ENCODE measurements at regions of chr17 and their contacts with region 1.

Region 1: GRCh38 chr17:29931231-29931932 is 1.4 kb upstream of the SSH2 start:
- DNase-seq: peak; percentile 83
- H3K4me3 Mint-ChIP-seq: no peak overlapping the region
- H3K27ac Mint-ChIP-seq: no peak overlapping the region
- H3K4me1 Mint-ChIP-seq: peaks cover 25% of the 10 kb centered on the region
- H3K27me3 Mint-ChIP-seq: no peaks in the 10 kb centered on the region
- CTCF ChIP-seq: peak; percentile 72

Region 2: DNA sequence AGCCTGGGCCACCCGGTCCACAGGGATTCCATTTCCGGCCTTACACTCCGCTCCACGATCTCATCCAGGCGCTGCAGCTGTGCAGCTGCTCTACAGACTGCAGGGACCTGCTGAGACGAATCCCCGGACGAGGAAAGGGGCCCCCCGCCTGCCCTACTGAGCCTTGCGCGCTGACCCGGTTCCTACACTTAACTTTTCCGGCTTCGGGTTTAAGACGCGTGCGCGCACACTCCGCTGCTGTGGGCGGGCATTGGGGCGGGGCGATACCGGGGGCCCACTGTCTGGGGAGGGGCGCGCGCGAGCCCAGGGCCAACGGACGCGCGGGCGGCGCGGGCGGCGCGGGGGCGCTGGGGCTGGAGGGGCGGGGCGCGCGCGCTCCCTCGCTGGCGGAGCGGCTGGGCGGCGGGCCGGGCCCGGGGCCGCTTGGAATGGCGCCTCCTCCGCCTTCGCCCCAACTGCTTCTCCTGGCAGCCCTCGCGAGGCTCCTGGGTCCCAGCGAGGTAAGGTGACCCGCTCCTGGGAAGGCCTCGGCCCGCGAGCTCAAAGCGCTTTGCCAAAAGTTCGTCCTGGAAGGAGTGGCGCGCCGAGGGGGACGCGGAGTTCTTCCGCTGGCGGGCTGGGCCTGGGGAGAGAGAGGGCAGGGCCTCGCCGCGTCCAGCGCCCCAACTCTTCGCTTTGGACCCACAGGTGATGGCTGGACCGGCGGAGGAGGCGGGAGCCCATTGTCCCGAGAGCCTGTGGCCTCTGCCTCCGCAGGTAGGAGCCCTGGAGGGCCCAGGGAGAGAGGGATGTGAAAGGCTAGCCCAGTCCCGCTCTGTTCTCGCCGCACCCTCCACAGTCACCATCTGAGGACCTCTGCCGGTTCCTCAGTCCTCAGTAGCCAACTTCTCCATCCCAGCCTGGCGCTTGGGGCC is 362.8 kb before region 1 on chr17 and contains the start of gene TP53I13:
- CTCF ChIA-PET with region 1: no interaction called
- POLR2A ChIA-PET with region 1: interaction called, 15 read pairs
- intact Hi-C with region 1: no loop called
- DNase-seq: peak; percentile 78
- H3K4me3 Mint-ChIP-seq: peak within 1 kb of the TSS; percentile 80
- H3K27ac Mint-ChIP-seq: peak within 1 kb of the TSS; percentile 78
- H3K4me1 Mint-ChIP-seq: peaks cover 14% of the 10 kb centered on the region
- H3K27me3 Mint-ChIP-seq: no peaks in the 10 kb centered on the region
- CTCF ChIP-seq: no peak
- total RNA-seq, gene TP53I13: 29.6 and 34.5 TPM in 2 replicates

Region 3: DNA sequence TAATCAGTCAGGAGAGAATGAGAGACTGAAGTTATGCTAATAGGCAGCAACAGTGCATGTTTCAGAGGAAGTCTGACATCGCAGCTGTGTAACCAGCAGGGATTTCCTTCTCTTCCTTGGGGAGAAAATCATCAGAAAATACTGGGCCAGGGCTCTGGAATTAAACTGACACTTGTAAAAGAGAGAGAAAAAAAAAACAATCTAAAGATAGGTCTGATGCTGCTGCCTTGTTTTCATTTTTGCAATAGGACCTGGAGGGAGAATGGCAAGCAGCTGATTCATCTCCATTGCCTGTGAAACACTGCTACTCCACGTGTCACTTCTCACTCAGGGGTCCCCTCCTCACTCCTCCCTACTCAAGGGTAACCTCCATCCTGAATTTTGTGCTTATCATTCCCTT is 291.0 kb before region 1 on chr17:
- CTCF ChIA-PET with region 1: interaction called, 43 read pairs
- POLR2A ChIA-PET with region 1: interaction called, 49 read pairs
- intact Hi-C with region 1: loop called (anchors 1 kb)
- DNase-seq: peak; percentile 33
- H3K4me3 Mint-ChIP-seq: no peak overlapping the region
- H3K27ac Mint-ChIP-seq: peak overlapping the region; percentile 68
- H3K4me1 Mint-ChIP-seq: peaks cover 35% of the 10 kb centered on the region
- H3K27me3 Mint-ChIP-seq: no peaks in the 10 kb centered on the region
- CTCF ChIP-seq: no peak

Region 4: GRCh38 chr17:29855686-29856085 is 75.7 kb before region 1 on chr17:
- CTCF ChIA-PET with region 1: interaction called, 13 read pairs
- POLR2A ChIA-PET with region 1: interaction called, 3 read pairs
- intact Hi-C with region 1: no loop called
- DNase-seq: peak; percentile 29
- H3K4me3 Mint-ChIP-seq: no peak overlapping the region
- H3K27ac Mint-ChIP-seq: no peak overlapping the region
- H3K4me1 Mint-ChIP-seq: peaks cover 20% of the 10 kb centered on the region
- H3K27me3 Mint-ChIP-seq: no peaks in the 10 kb centered on the region
- CTCF ChIP-seq: no peak

Region 5: GRCh38 chr17:29873476-29873875 is 57.9 kb before region 1 on chr17:
- CTCF ChIA-PET with region 1: interaction called, 52 read pairs
- POLR2A ChIA-PET with region 1: interaction called, 14 read pairs
- intact Hi-C with region 1: loop called (anchors 1 kb)
- DNase-seq: no peak
- H3K4me3 Mint-ChIP-seq: no peak overlapping the region
- H3K27ac Mint-ChIP-seq: no peak overlapping the region
- H3K4me1 Mint-ChIP-seq: peaks cover 5% of the 10 kb centered on the region
- H3K27me3 Mint-ChIP-seq: no peaks in the 10 kb centered on the region
- CTCF ChIP-seq: no peak

Region 6: DNA sequence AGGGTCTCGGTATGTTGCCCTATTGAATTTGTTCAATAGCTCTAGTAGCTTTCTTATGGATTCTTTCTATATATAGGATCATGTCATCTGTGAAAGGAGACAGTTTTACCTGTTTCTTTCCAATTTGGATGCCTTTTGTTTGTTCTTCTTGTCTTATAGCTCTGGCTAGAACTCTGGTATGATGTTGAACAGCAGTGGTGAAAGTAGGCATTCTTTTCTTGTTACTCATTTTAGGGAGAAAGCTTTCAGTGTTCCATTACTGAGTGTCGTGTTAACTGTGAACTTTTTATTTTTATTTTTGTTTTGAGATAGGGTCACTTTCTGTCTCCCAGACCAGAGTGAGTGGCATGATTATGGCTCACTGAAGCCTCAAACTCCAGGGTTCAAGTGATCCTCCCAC is 31.3 kb after region 1 on chr17:
- CTCF ChIA-PET with region 1: interaction called, 26 read pairs
- POLR2A ChIA-PET with region 1: interaction called, 4 read pairs
- intact Hi-C with region 1: no loop called
- DNase-seq: no peak
- H3K4me3 Mint-ChIP-seq: no peak overlapping the region
- H3K27ac Mint-ChIP-seq: no peak overlapping the region
- H3K4me1 Mint-ChIP-seq: peaks cover 16% of the 10 kb centered on the region
- H3K27me3 Mint-ChIP-seq: no peaks in the 10 kb centered on the region
- CTCF ChIP-seq: no peak

Region 7: DNA sequence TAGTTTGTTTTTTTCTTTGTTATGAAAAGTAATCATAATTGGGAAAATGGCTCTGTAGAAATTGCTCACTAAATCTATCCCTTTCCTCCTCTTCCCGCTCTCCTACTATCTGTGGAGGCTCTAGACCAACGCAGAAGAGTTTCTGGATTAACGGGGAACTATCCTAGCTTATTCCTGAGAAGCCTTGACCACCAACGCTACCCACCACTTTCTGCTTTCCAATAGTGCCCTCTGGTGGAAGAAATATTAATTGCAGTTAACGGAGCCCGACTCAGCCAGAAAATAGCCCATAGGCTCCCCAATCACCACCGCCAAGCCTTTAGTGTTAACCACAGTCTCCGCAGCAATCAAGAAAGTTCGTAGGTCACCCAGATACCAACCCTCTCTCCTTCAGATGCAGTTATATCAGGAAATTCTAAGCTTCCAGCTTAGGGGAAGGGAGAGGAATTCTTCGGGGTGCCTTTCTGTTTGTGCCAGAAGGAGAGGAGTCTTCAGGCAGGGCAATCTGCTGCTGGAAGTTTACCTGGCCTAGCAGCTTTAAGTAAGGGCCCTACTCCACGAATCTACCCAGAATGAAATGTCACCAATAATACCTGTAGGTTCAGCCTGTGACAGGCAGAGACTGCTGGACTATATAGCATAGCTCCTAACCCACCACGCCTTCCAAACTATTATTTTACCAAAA is 162.2 kb after region 1 on chr17:
- CTCF ChIA-PET with region 1: interaction called, 112 read pairs
- POLR2A ChIA-PET with region 1: interaction called, 5 read pairs
- intact Hi-C with region 1: loop called (anchors 2 kb)
- DNase-seq: peak; percentile 73
- H3K4me3 Mint-ChIP-seq: no peak overlapping the region
- H3K27ac Mint-ChIP-seq: no peak overlapping the region
- H3K4me1 Mint-ChIP-seq: peaks cover 14% of the 10 kb centered on the region
- H3K27me3 Mint-ChIP-seq: peaks cover 29% of the 10 kb centered on the region
- CTCF ChIP-seq: peak; percentile 78

Measured in MCF 10A (cell line).